HepG2 (cell line): ENCODE measurements at regions of chr11 and their contacts with region 1.

Region 1: GRCh38 chr11:1983601-1983961 is 14.1 kb downstream of the H19 start:
- DNase-seq: no peak
- ATAC-seq: no peak
- H3K4me3 ChIP-seq: no peak overlapping the region
- H3K27ac ChIP-seq: peak overlapping the region; percentile 48
- H3K4me1 ChIP-seq: no peaks in the 10 kb centered on the region
- H3K27me3 ChIP-seq: no peaks in the 10 kb centered on the region
- CTCF ChIP-seq: no peak
- EP300 ChIP-seq: no peak
- POLR2A ChIP-seq: no peak
- RAD21 ChIP-seq: no peak

Region 2: DNA sequence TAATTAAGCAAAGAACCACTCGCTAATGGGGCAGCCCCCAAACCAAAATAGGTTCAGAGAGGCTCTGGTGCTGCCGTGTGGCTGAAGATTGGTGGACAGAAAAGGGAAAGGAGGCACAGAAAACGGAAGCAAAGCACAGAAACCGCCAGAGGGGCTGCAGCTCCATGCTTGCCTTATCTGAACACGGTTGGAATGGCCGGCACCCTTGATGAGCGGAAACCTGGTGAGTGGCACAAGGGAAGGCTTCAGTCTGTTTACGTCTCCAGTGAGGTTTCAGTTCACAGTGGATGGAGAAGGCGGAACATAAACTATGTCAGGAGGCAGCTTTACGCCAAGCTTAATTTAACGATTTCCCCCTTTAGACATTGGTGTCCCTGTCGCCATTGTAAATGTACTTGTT is 86.7 kb before region 1 on chr11:
- CTCF ChIA-PET with region 1: no interaction called
- POLR2A ChIA-PET with region 1: no interaction called
- in situ Hi-C with region 1: no loop called
- intact Hi-C with region 1: no loop called
- DNase-seq: no peak
- ATAC-seq: no peak
- H3K4me3 ChIP-seq: no peak overlapping the region
- H3K27ac ChIP-seq: no peak overlapping the region
- H3K4me1 ChIP-seq: peaks cover 9% of the 10 kb centered on the region
- H3K27me3 ChIP-seq: peaks cover 0 to 31% of the 10 kb centered on the region in 2 experiments; a peak in 2 of 5 replicates
- CTCF ChIP-seq: no peak
- EP300 ChIP-seq: no peak
- POLR2A ChIP-seq: no peak
- RAD21 ChIP-seq: no peak

Region 3: DNA sequence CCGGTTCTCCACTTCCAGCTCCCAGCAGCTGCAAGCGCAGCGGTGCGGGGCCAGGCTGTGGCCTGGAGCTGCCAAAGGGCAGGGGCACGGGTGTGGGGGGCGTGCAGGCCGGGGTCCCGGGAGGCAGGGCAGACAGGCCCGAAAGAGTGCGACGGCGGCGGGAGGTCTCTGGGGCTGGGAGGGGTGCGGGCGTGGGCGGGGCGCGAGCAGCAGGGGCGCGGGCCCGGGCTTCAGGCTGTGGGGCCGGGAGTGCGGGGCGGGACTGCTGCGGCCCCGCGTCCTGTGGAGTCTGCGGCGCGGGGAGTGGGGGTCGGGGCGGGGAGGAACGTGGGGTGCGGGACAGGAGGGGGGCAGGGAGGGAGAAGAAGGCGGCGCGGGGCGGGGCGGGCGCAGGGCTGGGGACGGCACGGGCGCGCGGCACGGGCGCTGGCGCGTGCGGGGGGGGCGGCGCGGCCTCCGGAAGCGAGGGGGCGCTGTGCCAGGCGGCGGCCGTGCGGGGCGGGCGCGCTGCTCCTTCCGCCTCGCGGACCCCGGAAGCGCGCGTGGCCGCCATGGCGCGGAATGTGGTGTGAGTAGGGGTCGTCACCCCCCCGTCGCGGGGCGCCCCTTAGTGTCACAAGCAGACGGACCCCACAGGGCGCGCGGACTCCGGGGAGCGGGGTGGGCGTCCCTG is 36.6 kb before region 1 on chr11 and contains the start of gene MRPL23:
- CTCF ChIA-PET with region 1: no interaction called
- POLR2A ChIA-PET with region 1: interaction called, 124 read pairs
- in situ Hi-C with region 1: no loop called
- intact Hi-C with region 1: no loop called
- DNase-seq: no peak
- ATAC-seq: peak; percentile 57
- H3K4me3 ChIP-seq: no peak within 1 kb of the TSS
- H3K27ac ChIP-seq: no peak within 1 kb of the TSS
- H3K4me1 ChIP-seq: peaks cover 7% of the 10 kb centered on the region; the same call in 1 of the 2 replicates
- H3K27me3 ChIP-seq: peaks cover 0 to 4% of the 10 kb centered on the region in 2 experiments; a peak in 2 of 5 replicates
- CTCF ChIP-seq: no peak
- EP300 ChIP-seq: no peak
- POLR2A ChIP-seq: no peak
- RAD21 ChIP-seq: no peak
- total RNA-seq, gene MRPL23: 123 and 126 TPM in 2 replicates

Region 4: GRCh38 chr11:1953489-1954266 is 29.9 kb before region 1 on chr11:
- CTCF ChIA-PET with region 1: no interaction called
- POLR2A ChIA-PET with region 1: interaction called, 720 read pairs
- in situ Hi-C with region 1: no loop called
- intact Hi-C with region 1: no loop called
- DNase-seq: no peak
- ATAC-seq: peak; percentile 30; the same call in 2 of the 3 replicates
- H3K4me3 ChIP-seq: no peak overlapping the region
- H3K27ac ChIP-seq: no peak overlapping the region
- H3K4me1 ChIP-seq: no peaks in the 10 kb centered on the region
- H3K27me3 ChIP-seq: no peaks in the 10 kb centered on the region
- CTCF ChIP-seq: no peak
- EP300 ChIP-seq: no peak
- POLR2A ChIP-seq: no peak
- RAD21 ChIP-seq: no peak